Heart right ventricle (tissue), 16 donors: ENCODE measurements at regions of chrX and their contacts with region 1.

Region 1: DNA sequence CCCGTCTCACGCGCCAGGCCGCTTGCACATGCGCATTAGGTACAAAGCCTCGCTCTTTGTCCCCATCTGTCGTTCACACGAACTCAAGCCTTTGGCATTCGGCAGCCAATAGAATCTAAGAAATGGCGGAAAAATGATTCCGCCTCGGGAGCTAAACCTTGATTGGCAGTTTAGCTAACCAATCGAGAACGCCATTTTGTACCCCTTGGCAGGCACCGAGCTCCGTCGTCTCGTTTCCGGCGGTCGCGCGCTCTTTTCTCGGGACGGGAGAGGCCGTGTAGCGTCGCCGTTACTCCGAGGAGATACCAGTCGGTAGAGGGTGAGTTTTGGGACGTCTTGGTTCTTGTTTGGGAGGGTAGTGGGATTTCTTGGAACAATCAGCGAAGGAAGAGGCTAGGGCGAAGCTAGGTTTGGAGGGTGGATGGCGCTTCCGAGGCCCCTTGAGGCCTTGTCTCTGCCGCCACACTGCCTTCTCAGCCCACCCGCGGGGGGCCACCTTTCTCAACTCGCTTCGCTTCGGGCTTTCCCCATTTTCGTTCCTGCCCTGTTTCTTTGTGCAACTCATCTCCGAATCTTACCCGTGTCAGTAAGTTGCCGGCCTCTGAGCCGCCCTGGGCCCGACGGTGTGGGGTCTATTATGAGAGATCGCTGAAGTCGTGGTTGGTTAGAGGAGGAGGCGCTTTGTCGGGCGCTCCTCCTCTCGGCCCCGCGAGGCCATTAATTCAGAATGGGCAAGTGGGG is at the start of gene NONO:
- DNase-seq: peak; percentile 74 to 95
- ATAC-seq: peak; percentile 91 to 98 (median 96)
- H3K4me3 ChIP-seq: peak within 1 kb of the TSS; percentile 41 to 81 (median 72)
- H3K27ac ChIP-seq: peak within 1 kb of the TSS; percentile 76 to 96 (median 90)
- H3K4me1 ChIP-seq: peaks cover 0 to 37% (median 28%) of the 10 kb centered on the region in 9 donors
- H3K27me3 ChIP-seq: no peaks in the 10 kb centered on the region
- CTCF ChIP-seq: peak in 5 of 9 donors; percentile 13 to 47 (median 24)
- total RNA-seq, gene NONO: 99.3 to 145 (median 114) TPM

Region 2: DNA sequence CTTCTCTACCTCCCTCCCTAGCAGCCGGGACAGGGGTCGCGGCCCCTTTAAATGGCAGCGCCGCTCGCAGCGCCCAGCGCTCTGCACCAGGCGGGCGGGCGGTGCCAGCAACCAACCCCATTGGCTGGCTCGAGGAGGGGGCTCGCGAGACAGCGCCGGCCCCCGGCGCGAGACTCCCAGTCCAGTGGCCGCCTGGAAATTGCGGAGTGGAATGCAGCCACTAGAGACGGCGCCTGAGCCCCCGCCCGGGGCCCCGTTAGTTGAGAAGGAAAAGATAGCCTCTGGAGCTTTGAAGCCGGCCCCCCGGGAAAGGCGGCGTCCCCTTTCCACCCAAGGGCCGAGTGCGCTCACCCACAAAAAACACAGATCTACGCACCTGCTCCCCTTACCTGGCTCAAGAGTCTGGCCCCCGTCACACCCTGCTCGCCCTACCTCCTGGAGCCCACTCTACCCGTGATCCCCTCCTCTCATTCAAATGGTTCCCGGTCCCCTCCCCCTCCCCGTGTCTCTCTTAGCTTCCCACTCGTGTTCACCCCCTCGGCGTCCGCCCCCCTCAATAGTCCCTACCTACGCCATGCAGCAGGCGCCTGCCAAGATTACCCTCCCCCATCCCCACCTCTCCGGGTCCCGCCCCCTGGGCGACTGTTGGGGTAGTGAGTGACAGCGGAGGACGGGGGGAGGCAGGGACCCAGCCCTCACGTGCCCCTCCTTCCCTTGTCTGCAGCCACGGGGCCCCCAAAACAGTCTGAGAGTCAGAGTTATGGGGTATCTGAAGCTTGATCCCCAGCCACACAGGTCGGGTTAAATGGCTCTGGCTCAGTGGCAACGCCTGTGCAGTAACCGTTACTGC is 29.3 kb before region 1 on chrX and contains the start of gene ZMYM3:
- intact Hi-C with region 1: loop called in 2 of 10 experiments (anchors 1 to 2 kb)
- DNase-seq: peak; percentile 84 to 87
- ATAC-seq: peak; percentile 94 to 98 (median 97)
- H3K4me3 ChIP-seq: peak within 1 kb of the TSS; percentile 40 to 83 (median 72)
- H3K27ac ChIP-seq: peak within 1 kb of the TSS; percentile 79 to 92 (median 87)
- H3K4me1 ChIP-seq: peaks cover 0 to 14% (median 6%) of the 10 kb centered on the region in 9 donors
- H3K27me3 ChIP-seq: peaks cover 0 to 11% (median 0%) of the 10 kb centered on the region in 7 donors
- CTCF ChIP-seq: no peak
- total RNA-seq, gene ZMYM3: 10.3 to 18.7 (median 16.5) TPM

Region 3: DNA sequence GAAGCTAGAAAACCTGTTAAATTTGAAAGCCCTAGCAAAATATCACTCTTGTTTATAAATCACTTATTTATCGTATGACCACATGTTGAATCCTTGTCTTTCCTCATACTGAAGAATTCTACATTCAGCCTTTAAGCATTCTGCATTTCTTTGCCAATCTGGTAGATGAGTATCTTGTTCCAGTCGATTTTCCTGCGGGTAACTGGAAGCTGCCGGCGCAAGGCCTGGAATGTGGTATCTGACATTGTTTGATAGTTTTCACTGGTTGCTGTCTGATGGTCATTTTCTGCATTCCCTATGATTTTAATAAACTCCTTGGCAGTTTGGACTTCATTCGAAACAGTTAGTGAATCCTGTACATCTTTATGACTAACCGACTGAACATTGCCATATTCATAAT is 1444.3 kb after region 1 on chrX:
- intact Hi-C with region 1: no loop called
- DNase-seq: no peak
- ATAC-seq: no peak
- H3K4me3 ChIP-seq: no peak overlapping the region
- H3K27ac ChIP-seq: no peak overlapping the region
- H3K4me1 ChIP-seq: no peaks in the 10 kb centered on the region
- H3K27me3 ChIP-seq: peaks cover 0 to 47% (median 0%) of the 10 kb centered on the region in 7 donors
- CTCF ChIP-seq: no peak